ENCODE measurements at regions of chr15 and their contacts with region 1.

Region 1: DNA sequence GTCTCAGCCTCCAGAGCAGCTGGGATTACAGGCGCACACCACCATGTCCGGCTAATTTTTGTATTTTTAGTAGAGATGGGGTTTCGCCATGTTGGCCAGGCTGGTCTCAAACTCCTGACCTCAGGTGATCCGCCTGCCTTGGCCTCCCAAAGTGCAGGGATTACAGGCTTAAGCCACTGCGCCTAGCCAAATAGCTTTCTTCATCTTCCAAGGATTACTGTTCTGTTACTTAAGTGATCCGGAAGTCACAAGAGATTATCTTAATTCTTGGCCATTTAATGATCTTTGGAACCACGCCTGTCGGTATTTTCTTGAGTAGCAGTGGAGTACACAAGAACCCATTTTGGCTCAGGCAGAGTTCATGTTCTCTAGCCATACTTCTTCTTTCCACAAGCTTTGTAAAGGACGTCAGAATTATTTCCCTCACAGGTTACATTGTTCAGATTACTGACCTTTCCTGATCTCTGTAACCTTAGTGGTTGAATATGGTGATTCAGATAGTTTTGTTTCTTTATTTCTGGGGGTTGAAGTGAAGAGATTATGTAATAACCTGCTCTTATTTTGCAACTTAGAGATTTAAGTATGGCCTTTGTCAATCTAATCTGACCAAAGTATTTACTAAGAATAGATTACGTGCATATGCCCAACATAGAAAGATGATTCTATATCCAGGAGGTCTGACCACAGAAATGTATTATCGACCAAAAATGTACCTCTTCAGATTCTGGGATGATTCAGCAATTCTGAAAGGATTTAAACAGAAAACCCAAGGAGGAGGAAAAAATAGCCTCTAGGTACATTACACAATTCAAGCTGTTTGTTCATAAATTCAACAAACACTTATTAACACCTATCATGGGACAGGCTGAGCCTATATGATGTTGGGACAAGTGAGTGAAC is 132.2 kb downstream of the GREM1 start:
- DNase-seq: no peak
- H3K4me3 ChIP-seq: no peak overlapping the region
- H3K27ac ChIP-seq: no peak overlapping the region
- H3K4me1 ChIP-seq: no peaks in the 10 kb centered on the region
- H3K27me3 ChIP-seq: no peaks in the 10 kb centered on the region
- CTCF ChIP-seq: no peak

Region 2: DNA sequence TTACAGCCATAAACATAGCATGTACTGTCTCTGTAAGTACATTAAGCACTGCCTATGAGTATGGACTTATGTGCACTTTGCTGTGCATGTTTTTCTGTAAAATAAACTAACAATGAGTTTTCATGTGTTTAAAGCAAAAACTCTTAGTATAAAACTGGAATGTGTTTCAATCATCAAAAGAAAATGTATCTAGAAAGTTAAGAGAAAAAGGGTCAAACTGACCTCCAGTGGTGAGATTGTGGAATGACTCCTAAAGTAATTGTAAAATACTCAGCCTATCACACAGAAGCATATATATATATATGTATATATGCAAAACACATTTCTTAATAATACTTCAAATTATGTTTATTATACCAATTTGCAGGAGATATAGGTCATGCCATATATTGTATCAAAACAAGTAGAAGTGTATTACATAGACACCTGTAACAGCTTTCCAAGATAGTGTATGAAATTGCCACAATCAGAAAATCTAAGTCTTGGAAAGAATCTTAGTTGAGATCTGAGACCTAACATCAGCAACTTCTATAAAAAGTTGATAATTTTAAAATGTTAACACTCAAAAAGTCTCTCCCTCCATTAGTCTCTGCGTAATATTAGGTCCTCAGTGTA is 144.9 kb after region 1 on chr15:
- intact Hi-C with region 1: loop called (anchors 5 kb)
- DNase-seq: no peak
- H3K4me3 ChIP-seq: no peak overlapping the region
- H3K27ac ChIP-seq: no peak overlapping the region
- H3K4me1 ChIP-seq: no peaks in the 10 kb centered on the region
- H3K27me3 ChIP-seq: no peaks in the 10 kb centered on the region
- CTCF ChIP-seq: peak; percentile 64